CD4-positive, alpha-beta T cell (primary cell): ENCODE measurements at regions of chr5 and their contacts with region 1.

Region 1: GRCh38 chr5:125914471-125914870 is 508.7 kb upstream of the GRAMD2B start:
- DNase-seq: no peak
- ATAC-seq: no peak
- H3K4me3 ChIP-seq: no peak overlapping the region
- H3K4me3 Mint-ChIP-seq: no peak overlapping the region
- H3K27ac ChIP-seq: no peak overlapping the region
- H3K27ac Mint-ChIP-seq: no peak overlapping the region
- H3K4me1 ChIP-seq: no peaks in the 10 kb centered on the region
- H3K4me1 Mint-ChIP-seq: no peaks in the 10 kb centered on the region
- H3K27me3 ChIP-seq: no peaks in the 10 kb centered on the region
- H3K27me3 Mint-ChIP-seq: no peaks in the 10 kb centered on the region
- CTCF ChIP-seq: no peak

Region 2: DNA sequence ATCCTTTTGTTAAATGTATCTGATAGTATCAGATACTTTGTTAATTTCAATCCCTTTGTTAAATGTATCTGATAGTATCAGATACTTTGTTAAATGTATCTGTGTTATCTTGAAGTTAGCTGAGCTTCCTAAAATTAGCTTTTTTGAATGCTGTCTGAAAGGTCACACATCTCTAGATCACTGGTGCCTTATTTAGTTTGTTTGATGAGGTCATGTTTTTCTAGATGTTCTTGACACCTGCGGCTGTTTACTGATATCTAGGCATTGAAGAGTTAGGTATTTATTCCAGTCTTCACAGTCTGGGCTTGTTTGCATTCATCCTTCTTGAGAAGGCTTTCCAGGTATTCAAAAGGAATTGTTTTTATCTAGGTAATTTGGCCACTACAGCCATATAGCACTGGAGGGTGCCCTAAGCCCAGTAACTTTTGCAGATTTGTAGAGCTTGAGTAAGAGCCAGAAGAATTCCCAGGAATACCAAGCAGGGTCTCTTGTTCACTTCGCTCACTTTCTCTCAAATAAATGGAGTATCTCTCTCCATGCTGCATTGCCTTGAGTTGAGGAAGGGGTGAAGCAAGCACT is 73.3 kb after region 1 on chr5:
- CTCF ChIA-PET with region 1: no interaction called
- POLR2A ChIA-PET with region 1: no interaction called
- intact Hi-C with region 1: loop called in 1 of 2 experiments (anchors 2 kb)
- DNase-seq: no peak
- ATAC-seq: no peak
- H3K4me3 ChIP-seq: no peak overlapping the region
- H3K4me3 Mint-ChIP-seq: no peak overlapping the region
- H3K27ac ChIP-seq: no peak overlapping the region
- H3K27ac Mint-ChIP-seq: no peak overlapping the region
- H3K4me1 ChIP-seq: no peaks in the 10 kb centered on the region
- H3K4me1 Mint-ChIP-seq: no peaks in the 10 kb centered on the region
- H3K27me3 ChIP-seq: no peaks in the 10 kb centered on the region
- H3K27me3 Mint-ChIP-seq: no peaks in the 10 kb centered on the region
- CTCF ChIP-seq: no peak